Dendritic cell treated with granulocyte-macrophage colony-stimulating factor and Interleukin-4, amounts not matched to agents 40 ng/mL and 50 ng/mL, for 4 days (primary cell): ENCODE measurements at regions of chrX and their contacts with region 1.

Region 1: DNA sequence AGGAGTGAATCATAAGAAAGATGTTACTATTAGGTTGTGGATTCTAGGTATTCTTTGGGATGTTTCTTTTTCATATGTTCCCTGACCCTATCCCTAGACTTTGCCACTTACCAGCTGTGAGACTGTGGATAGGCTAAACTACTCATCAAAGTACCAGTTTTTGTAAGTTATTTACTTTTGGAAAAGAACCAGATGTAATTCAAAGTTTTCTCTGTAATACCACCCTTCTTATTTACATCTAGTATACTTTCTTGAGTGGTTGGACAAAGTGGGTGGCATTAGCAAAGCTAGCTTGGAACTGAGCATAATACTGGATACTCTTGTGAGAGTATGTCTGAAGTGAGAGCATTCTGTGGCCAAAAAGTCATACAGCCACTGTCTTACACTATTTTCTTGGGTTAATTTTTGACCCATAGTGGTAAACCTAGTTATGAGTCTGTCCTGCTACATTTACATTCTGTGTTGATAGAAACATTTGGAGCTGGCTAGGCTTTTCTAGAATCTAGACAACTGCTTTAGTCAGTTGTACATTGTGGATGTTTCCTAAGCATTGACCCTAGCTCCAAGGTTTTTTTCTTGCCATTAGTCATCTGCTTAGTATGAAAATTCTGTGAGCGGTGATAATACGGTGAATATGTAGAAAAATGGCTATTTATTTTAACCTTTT is 41.7 kb downstream of the KDM6A start:
- H3K4me3 Mint-ChIP-seq: no peak overlapping the region
- H3K27ac Mint-ChIP-seq: no peak overlapping the region
- H3K4me1 Mint-ChIP-seq: peaks cover 14% of the 10 kb centered on the region
- H3K27me3 Mint-ChIP-seq: no peaks in the 10 kb centered on the region

Region 2: GRCh38 chrX:44872817-44873414 is 41.7 kb before region 1 on chrX and contains the start of gene KDM6A:
- intact Hi-C with region 1: loop called (anchors 5 kb)
- H3K4me3 Mint-ChIP-seq: peak within 1 kb of the TSS; percentile 79
- H3K27ac Mint-ChIP-seq: peak within 1 kb of the TSS; percentile 89
- H3K4me1 Mint-ChIP-seq: no peaks in the 10 kb centered on the region
- H3K27me3 Mint-ChIP-seq: no peaks in the 10 kb centered on the region

Region 3: DNA sequence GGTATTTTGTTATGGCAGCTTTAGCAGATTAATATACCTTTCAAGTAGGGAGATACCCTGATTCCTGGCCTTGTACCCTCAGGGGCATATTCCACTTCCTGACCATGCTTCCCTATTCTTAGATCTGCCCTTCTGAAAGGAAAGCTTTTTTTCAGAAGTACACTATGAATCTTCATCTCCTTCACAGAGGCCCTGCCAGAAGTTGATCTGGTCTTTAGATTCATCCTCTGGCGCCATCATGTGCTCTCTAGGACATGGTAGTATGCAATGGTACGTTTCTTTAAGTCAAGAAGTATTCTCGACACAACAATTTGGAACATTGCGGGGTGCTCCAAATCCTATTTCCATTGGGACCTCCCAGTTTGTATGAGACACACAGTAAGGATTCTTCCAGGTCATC is 325.6 kb after region 1 on chrX:
- intact Hi-C with region 1: no loop called
- H3K4me3 Mint-ChIP-seq: no peak overlapping the region
- H3K27ac Mint-ChIP-seq: no peak overlapping the region
- H3K4me1 Mint-ChIP-seq: no peaks in the 10 kb centered on the region
- H3K27me3 Mint-ChIP-seq: peaks cover 1% of the 10 kb centered on the region